ENCODE measurements at regions of chr6 and their contacts with region 1.

Region 1: GRCh38 chr6:142902636-142903053 is 42.3 kb downstream of the HIVEP2 start:
- DNase-seq: peak; percentile 85 to 92 (median 87)
- H3K4me3 ChIP-seq: peak overlapping the region in 1 of 2 donors; percentile 25
- H3K4me3 Mint-ChIP-seq: peak overlapping the region in 7 of 8 donors; percentile 66 to 91 (median 82)
- H3K27ac ChIP-seq: peak overlapping the region; percentile 86
- H3K27ac Mint-ChIP-seq: peak overlapping the region in 3 of 7 donors; percentile 98 to 99 (median 98)
- H3K4me1 ChIP-seq: peaks cover 88% of the 10 kb centered on the region
- H3K4me1 Mint-ChIP-seq: peaks cover 10 to 54% (median 34%) of the 10 kb centered on the region in 4 donors
- H3K27me3 ChIP-seq: no peaks in the 10 kb centered on the region
- H3K27me3 Mint-ChIP-seq: no peaks in the 10 kb centered on the region

Region 2: DNA sequence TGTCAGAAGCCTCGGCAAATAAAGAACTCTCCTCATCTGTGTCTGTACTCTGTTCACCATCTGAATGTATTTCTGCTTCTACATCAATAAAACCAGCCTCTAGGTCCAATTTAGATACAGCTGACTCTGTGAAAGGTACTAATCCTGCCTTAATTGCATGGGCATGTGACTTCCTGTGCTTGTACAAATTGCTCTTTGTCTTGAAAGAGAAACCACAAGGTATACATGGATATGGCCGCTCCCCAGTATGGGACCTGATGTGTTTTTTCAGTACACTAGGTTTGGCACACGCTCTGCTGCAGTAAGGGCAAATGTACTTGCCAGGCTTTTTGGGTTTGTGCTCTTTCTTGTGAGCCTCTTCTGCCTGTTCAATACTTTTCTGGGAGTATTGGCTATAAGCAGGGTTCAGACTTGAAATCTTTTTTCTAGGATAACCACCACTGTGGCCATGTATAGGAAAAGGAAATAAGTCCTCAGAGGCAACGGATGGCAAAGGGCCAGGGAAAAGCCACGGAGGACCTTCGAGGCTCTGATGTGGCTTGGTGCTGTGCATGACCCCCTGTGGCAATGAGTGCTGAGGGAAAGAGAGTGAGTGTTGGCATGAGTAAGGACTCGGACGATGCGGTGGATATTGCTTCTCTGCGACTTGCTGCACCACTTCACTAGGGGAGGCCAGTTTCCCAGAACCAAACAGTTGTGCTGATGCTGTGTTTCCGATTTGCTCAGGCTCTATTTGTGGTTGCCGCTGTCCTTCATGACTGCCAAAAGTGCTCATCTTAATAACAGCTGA is 128.6 kb before region 1 on chr6:
- CTCF ChIA-PET with region 1: no interaction called
- POLR2A ChIA-PET with region 1: no interaction called
- intact Hi-C with region 1: no loop called
- DNase-seq: peak; percentile 45 to 57 (median 50)
- H3K4me3 ChIP-seq: peak overlapping the region in 1 of 2 donors; percentile 32
- H3K4me3 Mint-ChIP-seq: peak overlapping the region; percentile 57 to 88 (median 74)
- H3K27ac ChIP-seq: peak overlapping the region; percentile 53
- H3K27ac Mint-ChIP-seq: peak overlapping the region; percentile 74 to 93 (median 87)
- H3K4me1 ChIP-seq: peaks cover 38% of the 10 kb centered on the region
- H3K4me1 Mint-ChIP-seq: peaks cover 38 to 72% (median 54%) of the 10 kb centered on the region in 4 donors
- H3K27me3 ChIP-seq: no peaks in the 10 kb centered on the region
- H3K27me3 Mint-ChIP-seq: no peaks in the 10 kb centered on the region

Region 3: GRCh38 chr6:142833054-142833453 is 69.6 kb before region 1 on chr6:
- CTCF ChIA-PET with region 1: no interaction called
- POLR2A ChIA-PET with region 1: interaction called, 13 read pairs
- intact Hi-C with region 1: no loop called
- DNase-seq: no peak
- H3K4me3 ChIP-seq: no peak overlapping the region
- H3K4me3 Mint-ChIP-seq: peak overlapping the region in 5 of 8 donors; percentile 8 to 68 (median 38)
- H3K27ac ChIP-seq: no peak overlapping the region
- H3K27ac Mint-ChIP-seq: peak overlapping the region in 4 of 7 donors; percentile 15 to 77 (median 68)
- H3K4me1 ChIP-seq: peaks cover 53% of the 10 kb centered on the region
- H3K4me1 Mint-ChIP-seq: peaks cover 60 to 83% (median 73%) of the 10 kb centered on the region in 4 donors
- H3K27me3 ChIP-seq: no peaks in the 10 kb centered on the region
- H3K27me3 Mint-ChIP-seq: no peaks in the 10 kb centered on the region

Region 4: DNA sequence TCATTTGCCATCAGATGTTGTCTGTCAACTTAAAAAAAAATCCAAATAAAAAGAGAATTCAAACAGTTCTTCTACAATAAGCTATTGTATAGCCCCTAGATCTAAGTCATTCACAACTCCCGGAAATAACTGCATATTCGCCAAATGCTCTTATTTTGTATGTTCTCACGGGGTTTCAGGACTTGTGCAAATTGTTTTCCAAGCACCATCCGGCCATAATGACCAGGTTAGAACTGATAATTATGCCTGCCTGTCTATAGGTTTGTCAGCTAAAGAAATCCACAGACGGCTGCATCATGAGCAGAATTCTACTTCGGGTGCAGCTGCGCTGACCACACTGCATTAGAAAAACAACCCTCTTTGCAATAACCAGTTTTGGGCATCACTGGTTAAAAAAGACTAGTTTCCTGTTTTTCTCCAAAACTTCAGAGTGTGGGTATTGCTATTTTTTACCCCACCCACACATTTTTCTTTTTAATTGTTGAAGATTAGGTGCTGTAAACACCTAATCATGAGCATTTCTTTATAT is 45.3 kb before region 1 on chr6:
- CTCF ChIA-PET with region 1: interaction called, 4 read pairs
- POLR2A ChIA-PET with region 1: interaction called, 130 read pairs
- intact Hi-C with region 1: loop called (anchors 2 kb)
- DNase-seq: peak; percentile 55 to 66 (median 61)
- H3K4me3 ChIP-seq: peak overlapping the region; percentile 32 to 51
- H3K4me3 Mint-ChIP-seq: peak overlapping the region; percentile 81 to 94 (median 86)
- H3K27ac ChIP-seq: peak overlapping the region; percentile 81
- H3K27ac Mint-ChIP-seq: peak overlapping the region; percentile 91 to 98 (median 95)
- H3K4me1 ChIP-seq: peaks cover 96% of the 10 kb centered on the region
- H3K4me1 Mint-ChIP-seq: peaks cover 75 to 95% (median 86%) of the 10 kb centered on the region in 4 donors
- H3K27me3 ChIP-seq: no peaks in the 10 kb centered on the region
- H3K27me3 Mint-ChIP-seq: no peaks in the 10 kb centered on the region

Region 5: GRCh38 chr6:142871910-142872331 is 30.7 kb before region 1 on chr6:
- CTCF ChIA-PET with region 1: interaction called, 5 read pairs
- POLR2A ChIA-PET with region 1: interaction called, 18 read pairs
- intact Hi-C with region 1: no loop called
- DNase-seq: peak; percentile 64 to 88 (median 71)
- H3K4me3 ChIP-seq: no peak overlapping the region
- H3K4me3 Mint-ChIP-seq: peak overlapping the region; percentile 45 to 77 (median 65)
- H3K27ac ChIP-seq: peak overlapping the region; percentile 65
- H3K27ac Mint-ChIP-seq: peak overlapping the region; percentile 76 to 98 (median 95)
- H3K4me1 ChIP-seq: peaks cover 94% of the 10 kb centered on the region
- H3K4me1 Mint-ChIP-seq: peaks cover 74 to 95% (median 82%) of the 10 kb centered on the region in 4 donors
- H3K27me3 ChIP-seq: no peaks in the 10 kb centered on the region
- H3K27me3 Mint-ChIP-seq: no peaks in the 10 kb centered on the region

Region 6: GRCh38 chr6:142913511-142914047 is 10.9 kb after region 1 on chr6:
- CTCF ChIA-PET with region 1: interaction called, 3 read pairs
- POLR2A ChIA-PET with region 1: interaction called, 21 read pairs
- intact Hi-C with region 1: loop called (anchors 1 kb)
- DNase-seq: peak; percentile 78 to 88 (median 81)
- H3K4me3 ChIP-seq: peak overlapping the region; percentile 14 to 57
- H3K4me3 Mint-ChIP-seq: peak overlapping the region; percentile 84 to 95 (median 88)
- H3K27ac ChIP-seq: peak overlapping the region; percentile 85
- H3K27ac Mint-ChIP-seq: peak overlapping the region in 6 of 7 donors; percentile 98 to 100 (median 99)
- H3K4me1 ChIP-seq: peaks cover 97% of the 10 kb centered on the region
- H3K4me1 Mint-ChIP-seq: peaks cover 71 to 86% (median 80%) of the 10 kb centered on the region in 4 donors
- H3K27me3 ChIP-seq: no peaks in the 10 kb centered on the region
- H3K27me3 Mint-ChIP-seq: no peaks in the 10 kb centered on the region

Region 7: GRCh38 chr6:142926494-142927270 is 24.0 kb after region 1 on chr6:
- CTCF ChIA-PET with region 1: interaction called, 10 read pairs
- POLR2A ChIA-PET with region 1: interaction called, 249 read pairs
- intact Hi-C with region 1: loop called (anchors 1 kb)
- DNase-seq: peak; percentile 82 to 87 (median 86)
- H3K4me3 ChIP-seq: peak overlapping the region; percentile 82 to 86
- H3K4me3 Mint-ChIP-seq: peak overlapping the region; percentile 88 to 99 (median 94)
- H3K27ac ChIP-seq: peak overlapping the region; percentile 98
- H3K27ac Mint-ChIP-seq: peak overlapping the region; percentile 90 to 100 (median 98)
- H3K4me1 ChIP-seq: peaks cover 60% of the 10 kb centered on the region
- H3K4me1 Mint-ChIP-seq: peaks cover 42 to 77% (median 56%) of the 10 kb centered on the region in 4 donors
- H3K27me3 ChIP-seq: no peaks in the 10 kb centered on the region
- H3K27me3 Mint-ChIP-seq: no peaks in the 10 kb centered on the region

Region 8: DNA sequence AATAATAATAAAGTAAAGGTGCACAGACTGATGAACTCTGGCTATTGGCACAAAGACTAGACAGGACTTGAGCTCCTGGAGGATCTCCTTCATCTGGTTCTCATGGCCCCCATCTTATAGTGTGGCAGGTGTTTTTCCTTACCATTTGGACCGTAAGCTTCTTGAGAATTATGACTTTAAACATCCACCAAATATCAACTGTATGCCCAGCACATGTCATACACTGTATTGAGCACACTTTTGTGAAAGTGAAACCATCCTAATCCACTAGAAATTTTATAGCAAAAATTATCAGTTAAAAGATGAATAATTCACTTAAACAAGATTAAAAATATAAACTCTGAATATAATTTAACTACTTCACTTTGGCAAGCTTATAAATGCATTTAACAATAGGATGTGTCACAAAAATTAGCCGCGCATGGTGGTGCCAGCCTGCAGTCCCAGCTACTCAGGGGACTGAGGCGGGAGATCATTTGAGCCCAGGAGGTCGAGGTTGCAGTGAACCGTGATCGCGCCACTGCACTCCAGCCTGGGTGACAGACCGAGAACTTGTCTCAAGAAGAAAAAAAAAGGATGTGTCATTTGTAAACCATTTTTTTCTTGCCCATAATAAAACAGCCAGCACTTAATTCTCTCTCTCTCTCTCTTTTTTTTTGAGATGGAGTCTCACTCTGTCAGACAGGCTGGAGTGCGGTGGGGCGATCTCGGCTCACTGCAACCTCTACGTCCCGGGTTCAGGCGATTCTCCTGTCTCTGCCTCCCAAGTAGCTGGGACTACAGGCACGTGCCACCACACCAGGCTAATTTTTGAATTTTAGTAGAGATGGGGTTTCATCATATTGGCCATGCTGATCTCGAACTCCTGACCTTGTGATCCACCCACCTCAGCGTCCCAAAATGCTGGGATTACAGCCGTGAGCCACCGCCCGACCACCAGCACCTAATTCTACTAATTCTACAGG is 33.2 kb after region 1 on chr6:
- CTCF ChIA-PET with region 1: interaction called, 3 read pairs
- POLR2A ChIA-PET with region 1: interaction called, 274 read pairs
- intact Hi-C with region 1: no loop called
- DNase-seq: peak in 3 of 5 donors; percentile 38 to 74 (median 42)
- H3K4me3 ChIP-seq: peak overlapping the region in 1 of 2 donors; percentile 37
- H3K4me3 Mint-ChIP-seq: peak overlapping the region; percentile 87 to 95 (median 90)
- H3K27ac ChIP-seq: peak overlapping the region; percentile 65
- H3K27ac Mint-ChIP-seq: peak overlapping the region; percentile 88 to 97 (median 95)
- H3K4me1 ChIP-seq: peaks cover 97% of the 10 kb centered on the region
- H3K4me1 Mint-ChIP-seq: peaks cover 68 to 96% (median 84%) of the 10 kb centered on the region in 4 donors
- H3K27me3 ChIP-seq: no peaks in the 10 kb centered on the region
- H3K27me3 Mint-ChIP-seq: no peaks in the 10 kb centered on the region

Region 9: GRCh38 chr6:142960098-142960497 is 57.5 kb after region 1 on chr6:
- CTCF ChIA-PET with region 1: no interaction called
- POLR2A ChIA-PET with region 1: no interaction called
- intact Hi-C with region 1: no loop called
- DNase-seq: no peak
- H3K4me3 ChIP-seq: no peak overlapping the region
- H3K4me3 Mint-ChIP-seq: no peak overlapping the region
- H3K27ac ChIP-seq: no peak overlapping the region
- H3K27ac Mint-ChIP-seq: no peak overlapping the region
- H3K4me1 ChIP-seq: no peaks in the 10 kb centered on the region
- H3K4me1 Mint-ChIP-seq: no peaks in the 10 kb centered on the region
- H3K27me3 ChIP-seq: no peaks in the 10 kb centered on the region
- H3K27me3 Mint-ChIP-seq: no peaks in the 10 kb centered on the region

Region 10: DNA sequence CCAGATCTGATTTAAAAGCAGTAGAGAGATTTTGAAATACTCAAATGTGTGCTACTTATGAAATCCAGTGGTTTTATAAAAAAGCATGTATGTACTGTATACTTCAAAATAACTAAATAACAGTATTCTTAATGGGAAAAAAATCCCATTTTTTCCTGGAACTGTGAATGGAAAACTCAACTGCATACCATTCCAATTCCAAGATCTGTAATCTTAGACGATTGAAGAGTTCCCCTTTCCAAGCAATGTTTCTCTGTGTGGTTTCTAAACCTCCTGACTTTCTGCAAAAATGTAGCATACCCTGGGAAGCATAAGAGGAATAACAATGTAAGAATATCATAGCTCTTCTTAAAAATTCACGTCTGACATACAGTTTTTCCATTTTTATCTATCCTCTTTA is 82.6 kb after region 1 on chr6:
- CTCF ChIA-PET with region 1: no interaction called
- POLR2A ChIA-PET with region 1: no interaction called
- intact Hi-C with region 1: no loop called
- DNase-seq: no peak
- H3K4me3 ChIP-seq: no peak overlapping the region
- H3K4me3 Mint-ChIP-seq: no peak overlapping the region
- H3K27ac ChIP-seq: no peak overlapping the region
- H3K27ac Mint-ChIP-seq: no peak overlapping the region
- H3K4me1 ChIP-seq: no peaks in the 10 kb centered on the region
- H3K4me1 Mint-ChIP-seq: no peaks in the 10 kb centered on the region
- H3K27me3 ChIP-seq: no peaks in the 10 kb centered on the region
- H3K27me3 Mint-ChIP-seq: peaks cover 0 to 5% of the 10 kb centered on the region in 2 donors

Region 11: DNA sequence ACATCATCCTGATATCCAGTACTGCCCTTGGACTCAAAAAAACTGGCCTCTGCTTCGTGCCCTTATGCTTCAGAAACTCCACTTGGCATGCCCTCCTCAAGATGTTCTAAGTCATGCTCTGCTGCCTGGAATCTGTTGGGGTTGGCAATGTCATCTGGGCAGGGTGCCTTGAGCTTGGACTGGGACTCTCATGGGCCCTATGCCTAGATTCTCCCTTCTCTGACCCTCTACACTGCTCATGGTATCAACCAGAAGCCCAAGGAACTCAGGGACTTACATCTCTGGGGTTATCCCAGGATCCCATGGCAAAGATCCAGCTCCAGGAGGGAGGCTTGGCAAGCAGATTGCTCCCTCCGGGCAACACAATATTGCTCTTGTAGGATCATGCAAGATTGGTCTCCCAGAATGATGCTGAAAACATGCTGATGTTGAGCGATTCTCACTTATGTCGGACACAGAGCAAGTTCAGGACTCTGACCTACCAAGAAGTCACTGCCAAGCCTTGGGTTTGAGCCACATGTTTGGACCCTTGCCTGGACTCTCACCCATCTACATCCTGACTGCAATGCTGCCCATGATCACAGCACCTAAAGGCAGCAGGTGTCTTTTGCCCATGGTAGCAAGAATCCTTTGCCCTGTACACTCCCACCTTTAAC is 459.0 kb after region 1 on chr6:
- CTCF ChIA-PET with region 1: no interaction called
- POLR2A ChIA-PET with region 1: no interaction called
- intact Hi-C with region 1: no loop called
- DNase-seq: no peak
- H3K4me3 ChIP-seq: no peak overlapping the region
- H3K4me3 Mint-ChIP-seq: no peak overlapping the region
- H3K27ac ChIP-seq: no peak overlapping the region
- H3K27ac Mint-ChIP-seq: no peak overlapping the region
- H3K4me1 ChIP-seq: no peaks in the 10 kb centered on the region
- H3K4me1 Mint-ChIP-seq: no peaks in the 10 kb centered on the region
- H3K27me3 ChIP-seq: no peaks in the 10 kb centered on the region
- H3K27me3 Mint-ChIP-seq: peaks cover 0 to 3% of the 10 kb centered on the region in 2 donors

Measured in CD4-positive, alpha-beta memory T cell (primary cell).